Caco-2 (cell line): ENCODE measurements at regions of chr9 and their contacts with region 1.

Region 1: GRCh38 chr9:19925817-19926503 is 137.1 kb upstream of the SLC24A2 start:
- DNase-seq: peak; percentile 61 to 79
- H3K4me3 ChIP-seq: peak overlapping the region; percentile 21
- H3K4me3 Mint-ChIP-seq: peak overlapping the region; percentile 83
- H3K27ac Mint-ChIP-seq: peak overlapping the region; percentile 53
- H3K4me1 ChIP-seq: no peaks in the 10 kb centered on the region
- H3K4me1 Mint-ChIP-seq: peaks cover 8% of the 10 kb centered on the region
- H3K27me3 ChIP-seq: no peaks in the 10 kb centered on the region
- H3K27me3 Mint-ChIP-seq: peaks cover 2% of the 10 kb centered on the region
- CTCF ChIP-seq: peak; percentile 79 to 85

Region 2: GRCh38 chr9:19493174-19493811 is 432.7 kb before region 1 on chr9:
- CTCF ChIA-PET with region 1: no interaction called
- POLR2A ChIA-PET with region 1: no interaction called
- intact Hi-C with region 1: loop called (anchors 1 kb)
- DNase-seq: peak in 1 of 2 experiments; percentile 51
- H3K4me3 ChIP-seq: no peak overlapping the region
- H3K4me3 Mint-ChIP-seq: no peak overlapping the region
- H3K27ac Mint-ChIP-seq: no peak overlapping the region
- H3K4me1 ChIP-seq: no peaks in the 10 kb centered on the region
- H3K4me1 Mint-ChIP-seq: no peaks in the 10 kb centered on the region
- H3K27me3 ChIP-seq: no peaks in the 10 kb centered on the region
- H3K27me3 Mint-ChIP-seq: peaks cover 7% of the 10 kb centered on the region
- CTCF ChIP-seq: peak; percentile 55 to 61

Region 3: GRCh38 chr9:19940811-19941535 is 15.0 kb after region 1 on chr9:
- CTCF ChIA-PET with region 1: no interaction called
- POLR2A ChIA-PET with region 1: no interaction called
- intact Hi-C with region 1: no loop called
- DNase-seq: no peak
- H3K4me3 ChIP-seq: no peak overlapping the region
- H3K4me3 Mint-ChIP-seq: no peak overlapping the region
- H3K27ac Mint-ChIP-seq: no peak overlapping the region
- H3K4me1 ChIP-seq: no peaks in the 10 kb centered on the region
- H3K4me1 Mint-ChIP-seq: no peaks in the 10 kb centered on the region
- H3K27me3 ChIP-seq: no peaks in the 10 kb centered on the region
- H3K27me3 Mint-ChIP-seq: no peaks in the 10 kb centered on the region
- CTCF ChIP-seq: no peak

Region 4: DNA sequence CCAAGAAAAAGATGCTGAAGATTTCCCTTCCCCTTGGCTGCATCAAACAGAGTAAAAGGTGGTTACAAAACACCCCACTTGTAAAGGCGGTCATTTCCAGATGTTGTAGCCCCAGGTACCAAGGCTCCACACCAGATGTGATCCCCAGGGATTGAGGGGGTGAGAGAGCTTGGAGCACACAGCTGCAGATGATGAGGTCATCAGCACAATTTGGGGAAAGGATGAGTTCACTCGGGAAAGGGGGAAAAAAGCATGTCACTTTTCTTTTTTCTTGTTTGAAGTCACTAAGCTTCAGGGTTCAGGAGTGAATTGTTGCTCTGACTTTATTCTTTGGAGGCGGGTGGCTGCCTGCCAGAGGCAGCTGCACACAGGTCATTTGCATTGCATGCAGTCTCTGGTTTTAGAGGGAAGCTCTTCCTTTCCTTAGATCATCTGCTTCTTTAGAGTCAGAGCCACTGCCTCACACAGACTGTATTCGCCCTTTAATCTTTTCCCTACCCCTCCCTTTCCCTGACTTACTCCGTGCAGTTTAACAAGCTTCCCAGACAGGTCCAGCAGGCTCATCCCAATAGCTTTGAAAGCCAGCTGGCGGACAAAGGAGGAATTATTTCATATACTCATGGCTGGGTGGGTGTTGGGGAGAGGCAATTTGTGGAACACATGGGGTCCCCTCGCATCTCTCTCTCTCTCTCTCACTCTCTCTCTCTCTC is 272.2 kb after region 1 on chr9:
- CTCF ChIA-PET with region 1: no interaction called
- POLR2A ChIA-PET with region 1: no interaction called
- intact Hi-C with region 1: loop called (anchors 10 kb)
- DNase-seq: peak; percentile 51 to 60
- H3K4me3 ChIP-seq: no peak overlapping the region
- H3K4me3 Mint-ChIP-seq: peak overlapping the region; percentile 42
- H3K27ac Mint-ChIP-seq: no peak overlapping the region
- H3K4me1 ChIP-seq: 0 out of 2 replicates have a peak, but pooled peaks cover 5% of the 10 kb centered on the region
- H3K4me1 Mint-ChIP-seq: peaks cover 12% of the 10 kb centered on the region
- H3K27me3 ChIP-seq: no peaks in the 10 kb centered on the region
- H3K27me3 Mint-ChIP-seq: no peaks in the 10 kb centered on the region
- CTCF ChIP-seq: peak in 1 of 2 experiments; percentile 22

Region 5: DNA sequence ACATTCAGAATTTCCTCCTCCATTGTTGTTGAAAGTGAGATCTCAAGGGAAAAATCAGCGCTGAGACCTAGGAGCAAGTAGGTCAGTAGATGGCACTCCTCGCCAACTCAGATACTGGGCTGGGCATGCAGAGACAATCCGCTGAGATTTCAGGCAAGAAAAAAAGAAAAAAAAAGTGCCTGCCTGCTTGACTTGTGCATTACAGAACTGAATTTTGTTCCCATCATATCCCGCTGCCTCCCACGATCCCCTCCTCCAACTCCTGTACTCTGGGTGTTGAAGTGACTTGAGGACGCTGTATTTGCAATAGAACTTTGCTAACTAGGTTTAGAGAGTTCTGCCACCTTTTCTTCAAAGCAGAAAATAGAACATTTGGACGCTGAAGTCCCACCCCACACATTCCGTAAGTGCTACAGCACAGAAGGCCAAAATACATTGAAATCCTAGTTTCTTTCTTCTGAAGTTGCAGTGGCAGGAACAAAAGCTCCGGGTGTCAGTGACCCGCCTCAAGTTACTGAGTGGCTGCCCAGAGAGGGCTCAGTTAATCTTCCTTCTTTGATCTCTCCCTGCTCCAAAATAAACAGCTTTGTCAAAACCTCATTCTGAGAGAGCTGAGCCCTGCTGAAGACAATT is 430.6 kb after region 1 on chr9:
- CTCF ChIA-PET with region 1: no interaction called
- POLR2A ChIA-PET with region 1: no interaction called
- intact Hi-C with region 1: loop called (anchors 1 kb)
- DNase-seq: peak; percentile 65 to 71
- H3K4me3 ChIP-seq: no peak overlapping the region; the same call in 1 of the 2 replicates
- H3K4me3 Mint-ChIP-seq: peak overlapping the region; percentile 51
- H3K27ac Mint-ChIP-seq: peak overlapping the region; percentile 78
- H3K4me1 ChIP-seq: peaks cover 20% of the 10 kb centered on the region
- H3K4me1 Mint-ChIP-seq: peaks cover 11% of the 10 kb centered on the region
- H3K27me3 ChIP-seq: no peaks in the 10 kb centered on the region
- H3K27me3 Mint-ChIP-seq: no peaks in the 10 kb centered on the region
- CTCF ChIP-seq: peak; percentile 53 to 71

Region 6: GRCh38 chr9:20941174-20941690 is 1015.3 kb after region 1 on chr9:
- CTCF ChIA-PET with region 1: no interaction called
- POLR2A ChIA-PET with region 1: no interaction called
- intact Hi-C with region 1: loop called (anchors 2 kb)
- DNase-seq: peak; percentile 56 to 69
- H3K4me3 ChIP-seq: no peak overlapping the region
- H3K4me3 Mint-ChIP-seq: no peak overlapping the region
- H3K27ac Mint-ChIP-seq: no peak overlapping the region
- H3K4me1 ChIP-seq: 0 out of 2 replicates have a peak, but pooled peaks cover 4% of the 10 kb centered on the region
- H3K4me1 Mint-ChIP-seq: no peaks in the 10 kb centered on the region
- H3K27me3 ChIP-seq: no peaks in the 10 kb centered on the region
- H3K27me3 Mint-ChIP-seq: no peaks in the 10 kb centered on the region
- CTCF ChIP-seq: peak; percentile 55 to 71